Heart left ventricle (tissue), 16 donors: ENCODE measurements at regions of chr5 and their contacts with region 1.

Region 1: GRCh38 chr5:153974131-153974812 is 64.4 kb downstream of the FAM114A2 start:
- DNase-seq: no peak
- ATAC-seq: peak in 3 of 4 donors; percentile 25 to 71 (median 60)
- H3K4me3 ChIP-seq: no peak overlapping the region
- H3K27ac ChIP-seq: no peak overlapping the region
- H3K4me1 ChIP-seq: peaks cover 0 to 6% (median 0%) of the 10 kb centered on the region in 12 donors
- H3K27me3 ChIP-seq: no peaks in the 10 kb centered on the region
- CTCF ChIP-seq: peak; percentile 58 to 83 (median 74)
- POLR2A ChIP-seq: no peak

Region 2: GRCh38 chr5:154049636-154050035 is 75.4 kb after region 1 on chr5:
- intact Hi-C with region 1: loop called in 1 of 10 experiments (anchors 5 kb)
- DNase-seq: no peak
- ATAC-seq: no peak
- H3K4me3 ChIP-seq: no peak overlapping the region
- H3K27ac ChIP-seq: no peak overlapping the region
- H3K4me1 ChIP-seq: peaks cover 0 to 44% (median 15%) of the 10 kb centered on the region in 12 donors
- H3K27me3 ChIP-seq: no peaks in the 10 kb centered on the region
- CTCF ChIP-seq: no peak
- POLR2A ChIP-seq: no peak

Region 3: DNA sequence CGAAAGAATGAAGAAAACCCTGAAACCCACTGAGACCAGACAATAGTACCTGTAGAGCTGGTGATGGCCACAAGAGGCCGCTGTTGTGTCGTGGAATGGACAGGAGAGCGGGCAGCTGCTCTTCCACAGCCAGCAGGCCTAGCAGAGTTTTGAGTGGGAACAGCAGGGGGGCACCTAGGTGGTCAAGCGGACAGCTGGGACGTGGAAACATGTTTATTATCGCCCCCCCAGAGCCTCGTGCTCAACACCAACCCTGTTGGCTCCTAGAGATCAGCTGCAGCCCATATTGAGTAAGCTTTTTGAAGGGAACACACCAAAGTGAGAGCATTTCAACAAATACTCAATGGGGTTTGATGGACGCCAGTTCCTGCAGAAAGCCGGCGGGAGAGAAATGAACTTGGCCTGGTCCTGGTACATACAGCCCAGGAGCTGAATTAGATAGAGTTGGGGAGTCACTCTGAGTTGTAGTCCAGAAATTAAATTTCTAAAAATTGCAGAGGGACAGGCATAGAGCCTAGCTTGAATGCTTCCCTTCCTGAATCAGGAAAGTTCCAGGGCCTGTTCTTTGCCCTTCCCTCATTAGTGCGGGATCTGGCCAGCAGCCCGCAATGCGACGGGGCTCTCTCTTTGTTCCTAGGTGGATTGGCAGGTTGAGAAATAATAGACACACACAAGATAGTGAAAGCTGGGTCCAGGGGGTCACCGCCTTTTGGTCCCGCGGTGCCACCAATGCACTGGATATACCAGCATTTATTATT is 98.3 kb after region 1 on chr5:
- intact Hi-C with region 1: loop called in 3 of 10 experiments (anchors 2 to 10 kb)
- DNase-seq: peak; percentile 72 to 91 (median 83)
- ATAC-seq: peak; percentile 78 to 94 (median 90)
- H3K4me3 ChIP-seq: no peak overlapping the region
- H3K27ac ChIP-seq: peak overlapping the region in 2 of 12 donors; percentile 1 to 27
- H3K4me1 ChIP-seq: peaks cover 0 to 27% (median 11%) of the 10 kb centered on the region in 12 donors
- H3K27me3 ChIP-seq: no peaks in the 10 kb centered on the region
- CTCF ChIP-seq: peak; percentile 88 to 98 (median 95)
- POLR2A ChIP-seq: no peak

Region 4: DNA sequence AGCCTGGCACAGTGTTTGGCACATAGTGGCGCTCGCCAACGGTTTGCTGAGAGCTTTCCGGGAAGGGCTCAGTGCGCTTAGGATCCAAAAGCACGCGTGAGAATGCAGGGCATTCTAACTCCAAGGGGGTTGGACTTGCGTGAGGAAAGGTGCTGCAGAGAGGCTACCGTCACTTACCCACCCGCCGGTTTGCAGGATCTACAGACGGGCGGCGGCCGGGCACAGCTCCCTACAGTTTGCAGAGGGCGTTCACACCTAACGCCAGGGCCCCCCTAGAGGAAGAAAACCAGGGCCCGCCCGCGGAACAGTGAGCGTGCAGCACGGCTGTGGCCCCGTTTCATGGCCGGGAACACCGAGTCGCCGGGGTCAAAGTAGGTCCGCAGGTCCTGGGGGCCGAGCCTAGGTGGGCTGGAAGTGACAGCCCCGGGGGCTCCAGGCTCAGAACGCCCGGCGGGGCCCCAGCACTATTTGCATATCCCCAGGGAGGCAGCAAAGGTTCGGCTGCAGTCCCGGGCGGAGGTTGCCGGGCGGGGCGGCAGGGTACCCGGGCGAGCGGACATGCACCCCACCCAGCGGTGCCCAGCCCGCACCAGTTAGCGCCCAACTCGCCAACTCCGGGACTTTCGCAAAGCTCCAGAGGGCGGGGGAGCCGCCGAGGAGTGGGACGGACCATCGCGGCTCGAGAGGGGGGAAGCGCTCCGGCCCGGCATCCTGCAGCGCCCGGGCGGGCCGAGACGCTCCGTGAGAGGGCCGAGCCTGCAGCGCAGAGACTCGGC is 215.7 kb after region 1 on chr5:
- intact Hi-C with region 1: loop called in 1 of 10 experiments (anchors 5 kb)
- DNase-seq: peak; percentile 87 to 94 (median 90)
- ATAC-seq: peak; percentile 75 to 95 (median 91)
- H3K4me3 ChIP-seq: peak overlapping the region; percentile 62 to 99 (median 95)
- H3K27ac ChIP-seq: peak overlapping the region; percentile 36 to 92 (median 86)
- H3K4me1 ChIP-seq: peaks cover 0 to 47% (median 24%) of the 10 kb centered on the region in 12 donors
- H3K27me3 ChIP-seq: no peaks in the 10 kb centered on the region
- CTCF ChIP-seq: peak in 10 of 12 donors; percentile 9 to 65 (median 43)
- POLR2A ChIP-seq: peak in 1 of 2 donors; percentile 52

Region 5: GRCh38 chr5:154445422-154446182 is 471.3 kb after region 1 on chr5 and contains the start of gene SAP30L:
- intact Hi-C with region 1: loop called in 1 of 10 experiments (anchors 10 kb)
- DNase-seq: peak; percentile 95 to 98 (median 96)
- ATAC-seq: peak; percentile 97 to 99 (median 98)
- H3K4me3 ChIP-seq: peak within 1 kb of the TSS; percentile 87 to 99 (median 96)
- H3K27ac ChIP-seq: peak within 1 kb of the TSS; percentile 58 to 95 (median 85)
- H3K4me1 ChIP-seq: peaks cover 0 to 52% (median 34%) of the 10 kb centered on the region in 12 donors
- H3K27me3 ChIP-seq: no peaks in the 10 kb centered on the region
- CTCF ChIP-seq: no peak
- POLR2A ChIP-seq: peak; percentile 91 to 97
- total RNA-seq, gene SAP30L: 26.1 to 55.5 (median 38.6) TPM

Region 6: GRCh38 chr5:154610321-154611154 is 636.3 kb after region 1 on chr5:
- intact Hi-C with region 1: loop called in 2 of 10 experiments (anchors 10 kb)
- DNase-seq: peak; percentile 52 to 80 (median 74)
- ATAC-seq: peak; percentile 84 to 96 (median 91)
- H3K4me3 ChIP-seq: peak overlapping the region in 11 of 12 donors; percentile 24 to 48 (median 37)
- H3K27ac ChIP-seq: no peak overlapping the region
- H3K4me1 ChIP-seq: peaks cover 0 to 20% (median 10%) of the 10 kb centered on the region in 12 donors
- H3K27me3 ChIP-seq: peaks cover 10 to 57% (median 14%) of the 10 kb centered on the region in 9 donors
- CTCF ChIP-seq: peak; percentile 64 to 86 (median 76)
- POLR2A ChIP-seq: no peak